ENCODE measurements at regions of chr9 and their contacts with region 1.

Region 1: DNA sequence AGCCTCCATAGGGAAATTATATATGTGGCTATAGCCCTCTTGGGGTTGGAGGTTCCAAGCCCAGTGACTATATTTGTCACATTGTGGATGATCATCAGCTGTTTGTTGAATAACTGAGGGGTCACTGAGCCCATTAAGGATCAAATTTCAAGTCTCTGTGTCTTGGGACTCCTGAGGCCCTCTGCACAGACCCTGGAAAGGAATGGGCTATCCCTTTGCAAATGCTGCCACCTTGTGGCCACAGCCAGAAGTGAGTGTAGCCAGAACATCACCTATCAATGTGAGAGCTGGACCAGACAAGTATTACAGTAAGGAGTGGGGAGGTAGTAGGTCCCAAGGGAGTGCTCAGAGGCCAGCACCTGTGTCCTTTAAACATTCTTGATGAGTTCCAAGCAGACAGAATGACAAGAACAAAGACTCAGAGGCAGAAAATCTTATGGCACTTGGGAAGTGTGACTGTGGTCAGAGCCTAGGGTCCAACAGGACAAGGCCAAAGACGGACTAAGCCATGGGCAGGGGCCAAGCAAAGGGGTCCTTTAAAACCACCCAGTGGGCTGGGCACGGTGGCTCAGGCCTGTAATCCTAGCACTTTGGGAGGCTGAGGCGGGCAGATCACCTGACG is 8.2 kb downstream of the RPP25L start:
- DNase-seq: peak; percentile 83
- CTCF ChIP-seq: peak; percentile 91

Region 2: DNA sequence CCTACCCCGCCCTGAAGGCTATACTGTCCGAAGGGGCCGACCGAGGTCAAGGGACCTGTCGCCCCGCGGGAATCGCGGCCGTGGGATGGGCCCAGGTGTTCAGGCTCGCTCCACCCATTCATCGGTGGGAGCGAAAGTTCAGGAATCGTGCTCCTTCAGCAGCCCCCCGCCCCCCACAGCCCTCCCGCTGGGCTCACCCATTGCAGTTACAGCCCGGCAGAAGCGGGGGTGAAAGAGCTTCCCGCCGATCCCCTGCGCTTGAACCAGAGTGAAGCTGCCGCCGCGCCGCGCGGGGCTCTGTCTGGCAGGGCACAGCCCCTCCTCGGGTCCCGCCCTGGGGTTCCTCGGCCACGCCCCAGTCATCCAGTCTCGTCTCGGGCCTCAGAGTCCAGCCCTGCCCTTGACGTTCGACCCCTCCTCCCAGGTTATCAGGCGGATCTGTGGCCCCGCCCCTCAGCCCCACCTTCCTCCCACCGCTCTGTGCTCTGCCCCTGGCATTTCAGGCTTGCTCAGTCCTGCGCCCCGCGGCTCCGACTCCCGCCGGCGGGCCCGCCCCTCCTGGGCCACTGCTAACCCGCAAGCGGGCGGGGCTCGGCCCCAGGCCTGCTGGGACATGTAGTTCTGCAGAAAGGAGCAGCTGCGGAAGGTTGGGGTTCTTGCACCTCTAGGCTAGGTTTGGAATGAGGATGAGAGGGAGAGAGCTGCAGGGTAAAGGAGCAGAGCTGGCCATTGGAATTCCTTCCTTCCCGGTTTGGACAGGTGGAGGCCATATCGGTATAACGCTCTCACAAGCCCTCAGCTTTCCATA is 226.9 kb before region 1 on chr9 and contains the start of gene MYORG:
- CTCF ChIA-PET with region 1: interaction called, 12 read pairs
- POLR2A ChIA-PET with region 1: no interaction called
- DNase-seq: peak; percentile 99
- CTCF ChIP-seq: no peak

Region 3: GRCh38 chr9:34578241-34579103 is 25.2 kb before region 1 on chr9:
- CTCF ChIA-PET with region 1: interaction called, 15 read pairs
- POLR2A ChIA-PET with region 1: no interaction called
- DNase-seq: no peak
- CTCF ChIP-seq: no peak

Region 4: GRCh38 chr9:34591248-34591916 is 12.3 kb before region 1 on chr9:
- CTCF ChIA-PET with region 1: interaction called, 46 read pairs
- POLR2A ChIA-PET with region 1: no interaction called
- DNase-seq: peak; percentile 91
- CTCF ChIP-seq: peak; percentile 95

Region 5: GRCh38 chr9:34637356-34638137 is 33.8 kb after region 1 on chr9 and contains the start of gene SIGMAR1:
- CTCF ChIA-PET with region 1: interaction called, 328 read pairs
- POLR2A ChIA-PET with region 1: no interaction called
- DNase-seq: peak; percentile 93
- CTCF ChIP-seq: no peak

Region 6: DNA sequence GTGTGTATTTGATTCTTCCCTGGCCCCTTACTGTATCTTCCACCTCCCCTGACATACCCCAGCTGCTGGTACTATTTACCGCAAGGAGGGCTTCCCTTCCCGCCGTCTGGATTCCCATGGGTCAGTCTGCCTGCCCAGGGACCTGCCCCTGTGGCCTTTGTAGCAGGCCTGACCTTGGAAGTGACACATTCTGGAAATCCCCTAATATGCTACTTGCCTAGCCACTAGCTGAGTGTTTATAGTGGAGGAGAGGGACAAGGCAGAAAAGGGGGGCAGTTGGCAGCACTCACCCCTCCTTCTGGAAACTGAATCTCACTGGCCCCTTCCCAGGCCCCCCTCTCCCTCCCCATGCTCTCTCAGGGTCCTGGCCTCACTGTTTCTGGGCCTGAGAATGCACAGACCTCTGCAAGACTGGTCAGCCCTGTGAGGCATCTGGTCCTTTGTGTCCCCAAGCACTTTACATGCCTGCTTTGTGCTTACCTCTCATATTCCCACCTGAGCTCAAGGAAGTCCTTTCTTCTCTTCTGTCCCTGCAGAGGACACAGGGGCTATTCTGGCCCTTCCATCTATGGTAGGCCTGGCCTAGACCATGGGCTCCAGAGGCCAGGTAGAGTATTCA is 114.4 kb after region 1 on chr9:
- CTCF ChIA-PET with region 1: no interaction called
- POLR2A ChIA-PET with region 1: no interaction called
- DNase-seq: no peak
- CTCF ChIP-seq: no peak

Measured in GM10248 (cell line).